Colonic mucosa (tissue), 4 donors: ENCODE measurements at regions of chr4 and their contacts with region 1.

Region 1: GRCh38 chr4:121706595-121707021 is 9.8 kb upstream of the ANXA5 start:
- DNase-seq: no peak
- H3K4me3 ChIP-seq: no peak overlapping the region
- H3K27ac ChIP-seq: no peak overlapping the region
- H3K4me1 ChIP-seq: no peaks in the 10 kb centered on the region
- H3K27me3 ChIP-seq: no peaks in the 10 kb centered on the region
- CTCF ChIP-seq: no peak

Region 2: GRCh38 chr4:121789960-121790829 is 83.6 kb after region 1 on chr4:
- intact Hi-C with region 1: loop called (anchors 10 kb)
- DNase-seq: no peak
- H3K4me3 ChIP-seq: no peak overlapping the region
- H3K27ac ChIP-seq: no peak overlapping the region
- H3K4me1 ChIP-seq: no peaks in the 10 kb centered on the region
- H3K27me3 ChIP-seq: no peaks in the 10 kb centered on the region
- CTCF ChIP-seq: no peak

Region 3: GRCh38 chr4:122309988-122310626 is 603.5 kb after region 1 on chr4:
- intact Hi-C with region 1: no loop called
- DNase-seq: no peak
- H3K4me3 ChIP-seq: no peak overlapping the region
- H3K27ac ChIP-seq: no peak overlapping the region
- H3K4me1 ChIP-seq: no peaks in the 10 kb centered on the region
- H3K27me3 ChIP-seq: no peaks in the 10 kb centered on the region
- CTCF ChIP-seq: peak; percentile 26